Calu3 (cell line): ENCODE measurements at regions of chr14 and their contacts with region 1.

Region 1: GRCh38 chr14:55354500-55354899 is 57.1 kb downstream of the ATG14 start:
- DNase-seq: peak; percentile 65
- H3K4me3 Mint-ChIP-seq: no peak overlapping the region
- H3K27ac Mint-ChIP-seq: no peak overlapping the region
- H3K4me1 Mint-ChIP-seq: peaks cover 12% of the 10 kb centered on the region
- H3K27me3 Mint-ChIP-seq: no peaks in the 10 kb centered on the region
- CTCF ChIP-seq: peak; percentile 58

Region 2: GRCh38 chr14:55129428-55130195 is 224.9 kb before region 1 on chr14:
- CTCF ChIA-PET with region 1: no interaction called
- intact Hi-C with region 1: no loop called
- DNase-seq: peak; percentile 58
- H3K4me3 Mint-ChIP-seq: peak overlapping the region; percentile 80
- H3K27ac Mint-ChIP-seq: peak overlapping the region; percentile 83
- H3K4me1 Mint-ChIP-seq: peaks cover 37% of the 10 kb centered on the region
- H3K27me3 Mint-ChIP-seq: no peaks in the 10 kb centered on the region
- CTCF ChIP-seq: no peak

Region 3: GRCh38 chr14:55212634-55213033 is 141.9 kb before region 1 on chr14:
- CTCF ChIA-PET with region 1: interaction called, 10 read pairs
- intact Hi-C with region 1: loop called (anchors 2 kb)
- DNase-seq: peak; percentile 35
- H3K4me3 Mint-ChIP-seq: no peak overlapping the region
- H3K27ac Mint-ChIP-seq: no peak overlapping the region
- H3K4me1 Mint-ChIP-seq: no peaks in the 10 kb centered on the region
- H3K27me3 Mint-ChIP-seq: no peaks in the 10 kb centered on the region
- CTCF ChIP-seq: no peak

Region 4: GRCh38 chr14:55245657-55246268 is 108.7 kb before region 1 on chr14:
- CTCF ChIA-PET with region 1: interaction called, 10 read pairs
- intact Hi-C with region 1: no loop called
- DNase-seq: peak; percentile 33
- H3K4me3 Mint-ChIP-seq: no peak overlapping the region
- H3K27ac Mint-ChIP-seq: no peak overlapping the region
- H3K4me1 Mint-ChIP-seq: no peaks in the 10 kb centered on the region
- H3K27me3 Mint-ChIP-seq: peaks cover 50% of the 10 kb centered on the region
- CTCF ChIP-seq: peak; percentile 50

Region 5: GRCh38 chr14:55270832-55271565 is 83.5 kb before region 1 on chr14 and contains the start of gene FBXO34:
- CTCF ChIA-PET with region 1: interaction called, 13 read pairs
- intact Hi-C with region 1: loop called (anchors 1 kb)
- DNase-seq: peak; percentile 98
- H3K4me3 Mint-ChIP-seq: peak within 1 kb of the TSS; percentile 78
- H3K27ac Mint-ChIP-seq: peak within 1 kb of the TSS; percentile 81
- H3K4me1 Mint-ChIP-seq: peaks cover 28% of the 10 kb centered on the region
- H3K27me3 Mint-ChIP-seq: no peaks in the 10 kb centered on the region
- CTCF ChIP-seq: peak; percentile 98
- total RNA-seq, gene FBXO34: 30.0 and 34.5 TPM in 2 replicates

Region 6: GRCh38 chr14:55301437-55302121 is 52.9 kb before region 1 on chr14:
- CTCF ChIA-PET with region 1: interaction called, 10 read pairs
- intact Hi-C with region 1: loop called (anchors 5 kb)
- DNase-seq: peak; percentile 13
- H3K4me3 Mint-ChIP-seq: no peak overlapping the region
- H3K27ac Mint-ChIP-seq: no peak overlapping the region
- H3K4me1 Mint-ChIP-seq: peaks cover 19% of the 10 kb centered on the region
- H3K27me3 Mint-ChIP-seq: no peaks in the 10 kb centered on the region
- CTCF ChIP-seq: no peak

Region 7: GRCh38 chr14:55323910-55324309 is 30.6 kb before region 1 on chr14:
- CTCF ChIA-PET with region 1: no interaction called
- intact Hi-C with region 1: no loop called
- DNase-seq: no peak
- H3K4me3 Mint-ChIP-seq: no peak overlapping the region
- H3K27ac Mint-ChIP-seq: no peak overlapping the region
- H3K4me1 Mint-ChIP-seq: peaks cover 11% of the 10 kb centered on the region
- H3K27me3 Mint-ChIP-seq: no peaks in the 10 kb centered on the region
- CTCF ChIP-seq: no peak